ENCODE measurements at regions of chr14 and their contacts with region 1.

Region 1: GRCh38 chr14:104932676-104933631 is 8.3 kb downstream of the PLD4 start:
- DNase-seq: peak; percentile 68
- H3K4me3 ChIP-seq: peak overlapping the region; percentile 23 to 48 (median 40)
- H3K27ac ChIP-seq: no peak overlapping the region
- H3K4me1 ChIP-seq: peaks cover 6% of the 10 kb centered on the region
- H3K27me3 ChIP-seq: no peaks in the 10 kb centered on the region
- CTCF ChIP-seq: peak; percentile 46 to 72

Region 2: GRCh38 chr14:104158827-104159798 is 773.8 kb before region 1 on chr14:
- CTCF ChIA-PET with region 1: no interaction called
- dilution Hi-C with region 1: no loop called
- in situ Hi-C with region 1: no loop called
- intact Hi-C with region 1: no loop called
- DNase-seq: no peak
- H3K4me3 ChIP-seq: no peak overlapping the region
- H3K27ac ChIP-seq: no peak overlapping the region
- H3K4me1 ChIP-seq: no peaks in the 10 kb centered on the region
- H3K27me3 ChIP-seq: no peaks in the 10 kb centered on the region
- CTCF ChIP-seq: no peak

Region 3: GRCh38 chr14:104843442-104844305 is 89.3 kb before region 1 on chr14:
- CTCF ChIA-PET with region 1: no interaction called
- dilution Hi-C with region 1: loop called (anchors 5 kb)
- in situ Hi-C with region 1: no loop called
- intact Hi-C with region 1: no loop called
- DNase-seq: no peak
- H3K4me3 ChIP-seq: no peak overlapping the region
- H3K27ac ChIP-seq: no peak overlapping the region
- H3K4me1 ChIP-seq: peaks cover 5% of the 10 kb centered on the region
- H3K27me3 ChIP-seq: peaks cover 11% of the 10 kb centered on the region
- CTCF ChIP-seq: no peak

Region 4: DNA sequence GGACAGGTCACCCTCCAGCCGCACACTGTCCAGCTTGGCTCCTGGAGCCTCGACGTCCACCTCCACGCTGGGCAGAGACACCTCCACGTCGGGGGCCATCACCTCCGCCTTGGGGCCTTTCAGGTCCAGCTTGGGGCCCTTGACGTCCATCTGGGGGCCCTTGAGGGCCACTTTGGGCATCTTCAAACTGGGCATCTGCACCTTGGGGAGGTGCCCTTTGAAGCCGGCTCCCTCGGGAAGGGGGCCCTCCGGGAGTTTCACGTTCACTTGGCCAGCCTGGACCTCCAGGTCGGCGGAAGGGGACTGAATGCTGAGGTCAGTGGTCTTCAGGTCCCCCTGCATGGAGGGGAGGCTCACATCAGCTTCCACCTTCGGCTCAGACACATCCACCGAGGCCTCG is 17.1 kb after region 1 on chr14:
- CTCF ChIA-PET with region 1: no interaction called
- dilution Hi-C with region 1: no loop called
- in situ Hi-C with region 1: no loop called
- intact Hi-C with region 1: no loop called
- DNase-seq: no peak
- H3K4me3 ChIP-seq: no peak overlapping the region
- H3K27ac ChIP-seq: no peak overlapping the region
- H3K4me1 ChIP-seq: no peaks in the 10 kb centered on the region
- H3K27me3 ChIP-seq: no peaks in the 10 kb centered on the region
- CTCF ChIP-seq: no peak

Region 5: GRCh38 chr14:104968153-104968527 is 35.2 kb after region 1 on chr14:
- CTCF ChIA-PET with region 1: interaction called, 3 read pairs
- dilution Hi-C with region 1: no loop called
- in situ Hi-C with region 1: no loop called
- intact Hi-C with region 1: loop called (anchors 1 kb)
- DNase-seq: peak; percentile 79
- H3K4me3 ChIP-seq: peak overlapping the region; percentile 1 to 43 (median 24)
- H3K27ac ChIP-seq: peak overlapping the region; percentile 98
- H3K4me1 ChIP-seq: peaks cover 70% of the 10 kb centered on the region
- H3K27me3 ChIP-seq: no peaks in the 10 kb centered on the region
- CTCF ChIP-seq: no peak

Region 6: GRCh38 chr14:105026803-105027563 is 94.0 kb after region 1 on chr14:
- CTCF ChIA-PET with region 1: no interaction called
- dilution Hi-C with region 1: loop called (anchors 5 kb)
- in situ Hi-C with region 1: no loop called
- intact Hi-C with region 1: no loop called
- DNase-seq: no peak
- H3K4me3 ChIP-seq: no peak overlapping the region
- H3K27ac ChIP-seq: no peak overlapping the region
- H3K4me1 ChIP-seq: peaks cover 51% of the 10 kb centered on the region
- H3K27me3 ChIP-seq: no peaks in the 10 kb centered on the region
- CTCF ChIP-seq: no peak

Region 7: DNA sequence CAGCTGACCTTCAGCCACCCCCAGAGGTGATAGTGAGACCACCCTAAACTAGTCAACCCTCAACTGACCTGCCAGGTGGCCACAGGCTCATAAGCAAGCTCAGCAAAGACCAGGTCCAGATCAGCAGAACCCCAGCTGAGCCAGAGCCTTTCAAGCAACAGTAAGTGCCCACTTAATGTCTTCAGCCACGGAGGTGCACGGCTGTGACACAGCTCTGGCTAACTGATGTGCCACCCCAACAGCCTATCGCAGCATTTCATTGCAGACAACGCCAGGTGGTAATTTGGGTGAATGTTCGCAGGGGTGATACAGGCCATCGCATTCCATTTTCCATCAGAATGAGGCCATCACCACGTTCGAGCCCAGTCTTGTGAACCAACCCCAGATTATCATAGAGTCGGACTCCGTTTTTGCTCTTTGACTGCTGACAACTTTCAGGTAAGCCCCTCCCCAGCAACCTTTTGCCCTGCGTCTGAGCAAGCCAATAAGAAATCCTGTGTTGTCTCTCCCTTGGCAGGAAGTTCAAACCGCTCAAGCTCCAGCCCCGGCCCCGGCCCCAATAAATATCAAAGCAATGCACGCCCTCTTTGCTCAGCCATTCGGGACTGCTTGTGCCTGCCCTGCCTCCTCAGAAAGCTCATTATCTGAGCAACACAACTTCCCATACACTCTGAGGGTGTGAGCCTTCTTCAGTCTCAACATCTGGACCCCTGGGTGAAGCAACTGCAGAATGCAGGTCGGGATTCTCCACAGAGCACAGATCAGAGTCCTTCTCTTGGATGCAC is 191.2 kb after region 1 on chr14:
- CTCF ChIA-PET with region 1: no interaction called
- dilution Hi-C with region 1: loop called (anchors 5 kb)
- in situ Hi-C with region 1: no loop called
- intact Hi-C with region 1: no loop called
- DNase-seq: no peak
- H3K4me3 ChIP-seq: no peak overlapping the region
- H3K27ac ChIP-seq: no peak overlapping the region
- H3K4me1 ChIP-seq: peaks cover 12% of the 10 kb centered on the region
- H3K27me3 ChIP-seq: no peaks in the 10 kb centered on the region
- CTCF ChIP-seq: no peak

Region 8: DNA sequence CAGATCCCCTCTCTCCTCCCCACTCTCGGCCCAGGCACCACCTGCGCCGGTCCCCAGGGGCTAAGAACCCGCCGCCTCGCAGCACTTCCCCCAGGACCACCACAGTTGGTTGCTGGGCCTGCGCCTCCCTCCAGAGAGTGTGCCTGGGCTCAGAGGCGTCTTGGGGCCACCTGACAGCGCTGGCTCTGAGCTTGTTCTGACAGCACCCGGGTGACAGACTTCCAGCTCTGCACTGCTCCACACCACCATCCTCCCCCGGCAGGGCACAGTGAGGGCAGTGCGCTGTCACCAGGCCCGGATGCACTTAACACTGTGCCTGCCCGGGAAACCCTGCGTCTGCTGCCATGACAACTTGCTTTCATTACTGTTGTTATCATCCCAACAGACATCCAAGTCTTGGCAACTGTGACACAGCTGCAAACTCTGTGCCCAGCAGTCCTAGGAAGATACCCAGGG is 361.2 kb after region 1 on chr14:
- CTCF ChIA-PET with region 1: no interaction called
- dilution Hi-C with region 1: no loop called
- in situ Hi-C with region 1: no loop called
- intact Hi-C with region 1: no loop called
- DNase-seq: no peak
- H3K4me3 ChIP-seq: no peak overlapping the region
- H3K27ac ChIP-seq: no peak overlapping the region
- H3K4me1 ChIP-seq: peaks cover 1% of the 10 kb centered on the region
- H3K27me3 ChIP-seq: no peaks in the 10 kb centered on the region
- CTCF ChIP-seq: no peak